Activated CD4-positive, alpha-beta T cell treated with anti-CD3 and anti-CD28 coated beads for 36 hours (primary cell): ENCODE measurements at regions of chr2 and their contacts with region 1.

Region 1: DNA sequence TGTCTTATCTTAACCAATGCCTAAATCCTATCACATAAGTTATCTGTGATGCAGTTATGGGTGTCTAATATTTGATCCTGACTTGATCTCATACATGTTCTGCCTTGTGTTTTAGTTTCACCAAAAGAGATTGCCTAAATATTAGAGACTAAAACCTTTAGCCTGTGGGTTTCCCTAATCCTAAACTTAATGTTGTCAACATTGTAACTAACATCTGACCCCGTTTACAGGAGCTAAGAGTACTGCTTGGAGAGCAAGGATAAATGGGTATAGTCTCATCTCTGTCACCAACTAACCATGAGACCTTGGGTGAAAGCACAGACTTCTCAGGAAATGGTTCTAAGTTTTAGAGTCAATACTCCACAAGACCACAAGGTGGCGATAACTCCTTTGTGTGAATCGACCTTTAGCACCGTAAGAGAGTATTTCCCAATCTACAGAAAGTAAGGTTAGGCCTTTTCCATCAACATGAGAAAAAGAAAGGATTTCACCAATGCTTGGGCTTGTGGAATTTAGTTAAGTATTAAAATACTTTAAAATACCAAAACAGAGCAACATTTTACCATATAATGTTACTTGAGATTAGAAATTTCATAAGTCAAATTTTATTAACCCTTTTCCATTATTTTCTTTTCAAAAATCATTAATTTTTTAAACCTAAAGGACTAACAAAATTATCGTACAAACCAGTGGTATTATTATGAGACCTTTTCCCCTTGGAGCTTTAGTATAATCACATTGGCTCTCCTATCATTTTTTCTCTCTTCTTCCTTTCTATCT is 60.5 kb downstream of the G6PC2 start:
- DNase-seq: peak; percentile 26
- ATAC-seq: peak; percentile 89
- H3K4me3 Mint-ChIP-seq: no peak overlapping the region
- H3K27ac Mint-ChIP-seq: no peak overlapping the region
- H3K4me1 Mint-ChIP-seq: peaks cover 34% of the 10 kb centered on the region
- H3K27me3 Mint-ChIP-seq: peaks cover 2% of the 10 kb centered on the region

Region 2: GRCh38 chr2:168848232-168848631 is 113.4 kb before region 1 on chr2:
- CTCF ChIA-PET with region 1: no interaction called
- POLR2A ChIA-PET with region 1: no interaction called
- intact Hi-C with region 1: no loop called
- DNase-seq: no peak
- ATAC-seq: no peak
- H3K4me3 Mint-ChIP-seq: no peak overlapping the region
- H3K27ac Mint-ChIP-seq: no peak overlapping the region
- H3K4me1 Mint-ChIP-seq: no peaks in the 10 kb centered on the region
- H3K27me3 Mint-ChIP-seq: no peaks in the 10 kb centered on the region

Region 3: GRCh38 chr2:169131587-169132512 is 170.2 kb after region 1 on chr2:
- CTCF ChIA-PET with region 1: interaction called, 29 read pairs
- POLR2A ChIA-PET with region 1: no interaction called
- intact Hi-C with region 1: loop called (anchors 1 kb)
- DNase-seq: no peak
- ATAC-seq: peak; percentile 97
- H3K4me3 Mint-ChIP-seq: no peak overlapping the region
- H3K27ac Mint-ChIP-seq: no peak overlapping the region
- H3K4me1 Mint-ChIP-seq: no peaks in the 10 kb centered on the region
- H3K27me3 Mint-ChIP-seq: peaks cover 2% of the 10 kb centered on the region

Region 4: GRCh38 chr2:169141713-169142352 is 180.2 kb after region 1 on chr2:
- CTCF ChIA-PET with region 1: interaction called, 42 read pairs
- POLR2A ChIA-PET with region 1: no interaction called
- intact Hi-C with region 1: loop called (anchors 2 kb)
- DNase-seq: peak; percentile 75
- ATAC-seq: peak; percentile 85
- H3K4me3 Mint-ChIP-seq: no peak overlapping the region
- H3K27ac Mint-ChIP-seq: no peak overlapping the region
- H3K4me1 Mint-ChIP-seq: no peaks in the 10 kb centered on the region
- H3K27me3 Mint-ChIP-seq: no peaks in the 10 kb centered on the region

Region 5: GRCh38 chr2:169221745-169222369 is 260.2 kb after region 1 on chr2:
- CTCF ChIA-PET with region 1: no interaction called
- POLR2A ChIA-PET with region 1: no interaction called
- intact Hi-C with region 1: loop called in 1 of 2 experiments (anchors 5 kb)
- DNase-seq: no peak
- ATAC-seq: no peak
- H3K4me3 Mint-ChIP-seq: no peak overlapping the region
- H3K27ac Mint-ChIP-seq: no peak overlapping the region
- H3K4me1 Mint-ChIP-seq: no peaks in the 10 kb centered on the region
- H3K27me3 Mint-ChIP-seq: no peaks in the 10 kb centered on the region

Region 6: DNA sequence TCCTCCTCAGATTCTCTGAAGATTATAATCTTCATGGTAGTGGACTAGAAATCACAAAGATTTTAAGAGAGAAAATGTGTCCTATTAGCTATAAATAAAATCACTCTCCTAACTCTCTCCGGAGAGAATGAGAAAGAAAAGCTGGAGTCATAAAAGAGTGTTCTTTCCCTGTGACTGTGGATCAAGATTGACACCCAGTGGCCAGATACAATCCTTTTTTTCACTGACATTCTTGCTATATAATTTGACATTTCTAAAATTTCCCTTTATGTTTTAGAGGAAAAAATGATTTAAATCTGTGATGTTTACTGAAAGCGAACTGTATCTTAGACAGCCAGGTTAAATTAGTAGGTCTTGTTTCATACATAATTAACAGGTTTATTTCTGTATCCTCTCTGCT is 436.1 kb after region 1 on chr2:
- CTCF ChIA-PET with region 1: no interaction called
- POLR2A ChIA-PET with region 1: no interaction called
- intact Hi-C with region 1: loop called in 1 of 2 experiments (anchors 5 kb)
- DNase-seq: no peak
- ATAC-seq: no peak
- H3K4me3 Mint-ChIP-seq: no peak overlapping the region
- H3K27ac Mint-ChIP-seq: no peak overlapping the region
- H3K4me1 Mint-ChIP-seq: no peaks in the 10 kb centered on the region
- H3K27me3 Mint-ChIP-seq: peaks cover 9% of the 10 kb centered on the region